Aorta (tissue), 5 donors: ENCODE measurements at regions of chr5 and their contacts with region 1.

Region 1: DNA sequence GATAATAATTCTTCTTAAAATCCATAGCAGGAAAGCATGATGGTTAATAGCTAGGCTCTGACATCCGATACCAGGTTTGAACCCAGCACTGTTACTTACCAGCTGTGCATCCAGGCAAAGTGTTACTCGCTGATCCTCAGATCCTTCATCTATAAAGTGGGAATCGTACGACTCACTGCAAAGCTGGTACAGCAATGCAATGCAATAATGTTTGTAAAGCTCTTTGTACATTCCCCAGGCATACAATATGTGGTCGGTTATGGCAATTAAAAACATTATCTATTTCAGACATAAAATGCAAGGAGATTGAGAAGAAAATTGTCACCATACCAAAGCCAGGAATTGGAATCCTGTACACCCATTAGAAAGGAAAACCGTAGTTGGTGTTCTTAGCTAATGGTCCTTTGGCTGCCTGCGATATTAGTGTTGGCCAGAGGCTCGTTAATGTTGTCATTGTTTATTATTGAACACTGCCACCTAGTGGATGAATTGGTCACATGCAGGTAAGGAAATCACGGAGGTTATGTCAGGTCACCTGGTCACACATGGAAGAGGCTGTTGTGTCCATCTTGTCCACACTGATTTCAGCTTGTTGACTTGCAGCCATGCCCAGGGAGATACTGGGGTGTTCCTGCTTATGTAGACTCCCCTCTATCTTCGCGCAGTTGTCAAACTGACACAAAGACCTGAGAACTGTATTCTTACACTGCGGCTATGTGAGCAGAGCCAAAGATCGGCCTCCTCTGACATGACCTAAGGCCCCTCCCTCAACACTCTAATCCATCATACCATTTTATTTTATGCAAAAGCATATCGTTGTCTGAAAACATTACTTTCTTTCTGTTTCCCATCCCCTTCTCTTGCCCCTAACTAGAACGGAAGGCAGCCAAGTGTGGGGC is 87.5 kb upstream of the PPP2R2B start:
- DNase-seq: peak in 1 of 2 donors; percentile 46
- ATAC-seq: peak; percentile 90
- H3K4me3 ChIP-seq: no peak overlapping the region
- H3K27ac ChIP-seq: no peak overlapping the region
- H3K4me1 ChIP-seq: peaks cover 1 to 3% of the 10 kb centered on the region in 2 donors
- H3K27me3 ChIP-seq: no peaks in the 10 kb centered on the region

Region 2: DNA sequence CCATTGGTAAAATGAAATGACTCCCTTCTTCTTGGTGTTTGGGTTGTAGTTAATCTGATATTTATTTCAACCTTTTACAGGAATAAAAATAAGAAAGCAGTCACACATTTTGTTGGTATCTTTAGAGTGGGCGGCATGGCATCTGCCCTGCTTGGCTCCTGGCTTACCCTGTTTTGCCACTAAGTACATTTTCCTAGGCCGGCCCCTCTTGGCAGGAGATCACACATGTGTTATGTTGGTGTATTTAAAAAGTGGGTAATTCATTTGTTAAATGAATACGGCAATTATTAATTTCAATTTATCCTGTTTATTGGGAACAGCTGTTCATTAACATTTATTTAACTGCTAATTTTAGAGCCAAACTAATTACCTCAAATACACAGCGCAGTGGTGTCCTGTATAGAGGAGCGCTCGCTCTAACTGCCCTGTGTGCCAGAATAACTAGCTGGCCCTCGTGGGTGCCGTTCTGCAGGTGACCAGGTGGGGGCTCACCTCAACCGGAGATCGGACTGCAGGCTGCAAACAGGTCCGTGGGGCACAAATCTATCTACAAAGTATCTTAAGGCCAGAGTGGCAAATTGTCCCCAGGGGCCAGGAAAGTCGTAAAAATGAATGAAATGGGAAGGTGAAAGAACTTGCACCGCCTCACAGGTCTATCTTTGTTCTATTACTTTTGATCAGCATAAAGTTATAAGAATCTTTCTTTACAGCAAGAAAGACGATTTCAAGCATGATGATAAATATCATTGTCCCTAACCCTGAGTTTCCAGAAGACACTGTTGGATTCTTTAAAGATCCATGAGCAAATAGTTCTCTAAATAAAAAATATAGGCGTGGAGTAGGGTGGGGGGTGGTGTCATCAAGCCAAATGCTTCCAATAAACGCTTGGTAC is 423.8 kb before region 1 on chr5:
- intact Hi-C with region 1: loop called (anchors 2 to 5 kb)
- DNase-seq: peak; percentile 73 to 92
- ATAC-seq: peak; percentile 86
- H3K4me3 ChIP-seq: no peak overlapping the region
- H3K27ac ChIP-seq: no peak overlapping the region
- H3K4me1 ChIP-seq: no peaks in the 10 kb centered on the region
- H3K27me3 ChIP-seq: no peaks in the 10 kb centered on the region

Region 3: GRCh38 chr5:146667633-146668272 is 298.3 kb before region 1 on chr5:
- intact Hi-C with region 1: loop called (anchors 5 to 10 kb)
- DNase-seq: no peak
- ATAC-seq: peak; percentile 91
- H3K4me3 ChIP-seq: no peak overlapping the region
- H3K27ac ChIP-seq: peak overlapping the region; percentile 96 to 97
- H3K4me1 ChIP-seq: peaks cover 0 to 4% of the 10 kb centered on the region in 2 donors
- H3K27me3 ChIP-seq: no peaks in the 10 kb centered on the region

Region 4: GRCh38 chr5:146825033-146825432 is 141.0 kb before region 1 on chr5:
- intact Hi-C with region 1: loop called in 1 of 2 experiments (anchors 5 kb)
- DNase-seq: peak; percentile 52 to 79
- ATAC-seq: no peak
- H3K4me3 ChIP-seq: no peak overlapping the region
- H3K27ac ChIP-seq: no peak overlapping the region
- H3K4me1 ChIP-seq: peaks cover 0 to 5% of the 10 kb centered on the region in 2 donors
- H3K27me3 ChIP-seq: no peaks in the 10 kb centered on the region

Region 5: DNA sequence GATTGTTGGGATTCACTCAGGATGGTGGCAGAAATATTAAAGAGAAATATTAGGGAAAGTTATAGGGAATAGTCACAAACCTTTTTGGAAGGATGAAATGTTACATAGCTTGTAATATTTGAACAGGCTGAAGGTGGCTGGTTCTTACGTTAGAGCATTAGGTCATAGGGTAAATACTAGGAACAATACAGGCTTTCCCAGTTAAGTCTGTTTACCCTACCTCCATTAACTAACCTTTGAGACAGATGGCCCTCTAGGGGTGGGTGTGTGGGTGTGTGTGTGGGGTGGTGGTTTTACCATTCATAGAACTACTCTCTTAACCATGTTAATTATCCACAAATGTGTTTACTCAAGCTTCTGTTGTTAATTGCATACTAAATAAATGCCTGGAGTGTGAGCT is 174.5 kb after region 1 on chr5:
- intact Hi-C with region 1: no loop called
- DNase-seq: peak in 1 of 2 donors; percentile 37
- ATAC-seq: no peak
- H3K4me3 ChIP-seq: no peak overlapping the region
- H3K27ac ChIP-seq: no peak overlapping the region
- H3K4me1 ChIP-seq: no peaks in the 10 kb centered on the region
- H3K27me3 ChIP-seq: no peaks in the 10 kb centered on the region

Region 6: GRCh38 chr5:147188200-147189108 is 222.4 kb after region 1 on chr5:
- intact Hi-C with region 1: loop called in 1 of 2 experiments (anchors 10 kb)
- DNase-seq: no peak
- ATAC-seq: peak; percentile 88
- H3K4me3 ChIP-seq: no peak overlapping the region
- H3K27ac ChIP-seq: no peak overlapping the region
- H3K4me1 ChIP-seq: no peaks in the 10 kb centered on the region
- H3K27me3 ChIP-seq: no peaks in the 10 kb centered on the region